T-cell (primary cell): ENCODE measurements at regions of chr17 and their contacts with region 1.

Region 1: DNA sequence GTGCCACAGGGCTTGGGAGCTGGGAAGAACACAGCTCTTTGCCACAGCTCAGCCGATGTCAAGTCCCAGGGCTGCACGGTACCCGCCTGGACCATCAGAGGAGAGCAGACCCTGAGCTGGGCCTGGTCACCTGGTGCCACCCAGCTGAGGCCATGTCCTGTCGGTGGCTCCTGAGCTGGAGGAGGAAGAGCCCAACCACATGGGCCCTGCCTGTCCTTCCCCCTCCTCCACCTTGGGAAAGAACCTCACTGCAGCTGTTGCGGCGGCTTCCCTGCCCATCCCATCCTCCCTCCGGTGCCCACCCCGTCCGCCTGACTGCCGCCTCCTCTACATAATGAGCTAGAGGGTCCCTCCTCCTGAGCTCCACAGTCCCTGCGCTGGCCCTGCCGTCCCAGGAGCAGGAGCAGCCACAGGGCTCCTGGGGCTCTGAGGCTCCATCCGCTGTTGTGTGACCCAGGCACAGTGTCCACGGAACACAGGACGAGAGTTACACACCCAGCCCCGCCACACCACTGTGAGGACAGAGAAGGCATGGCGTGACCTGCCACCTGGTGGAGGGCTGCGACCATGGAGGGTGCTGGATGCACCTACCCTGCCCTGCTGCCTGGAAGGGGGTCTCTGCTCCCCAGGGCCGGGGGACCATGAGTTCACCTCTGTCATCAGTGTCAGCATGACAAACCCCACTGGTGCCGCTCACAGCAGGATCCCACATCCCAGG is 21.4 kb upstream of the CHMP6 start:
- DNase-seq: peak in 27 of 35 experiments; percentile 15 to 53 (median 32)
- ATAC-seq: peak; percentile 37 to 72 (median 60)
- H3K4me3 ChIP-seq: no peak overlapping the region
- H3K4me3 Mint-ChIP-seq: peak overlapping the region in 1 of 3 donors; percentile 29
- H3K27ac ChIP-seq: no peak overlapping the region
- H3K27ac Mint-ChIP-seq: no peak overlapping the region
- H3K4me1 ChIP-seq: peaks cover 0 to 27% of the 10 kb centered on the region in 2 experiments
- H3K4me1 Mint-ChIP-seq: peaks cover 5 to 11% (median 6%) of the 10 kb centered on the region in 3 donors
- H3K27me3 ChIP-seq: peaks cover 0 to 31% of the 10 kb centered on the region in 2 experiments
- H3K27me3 Mint-ChIP-seq: peaks cover 4 to 5% of the 10 kb centered on the region in 2 donors

Region 2: DNA sequence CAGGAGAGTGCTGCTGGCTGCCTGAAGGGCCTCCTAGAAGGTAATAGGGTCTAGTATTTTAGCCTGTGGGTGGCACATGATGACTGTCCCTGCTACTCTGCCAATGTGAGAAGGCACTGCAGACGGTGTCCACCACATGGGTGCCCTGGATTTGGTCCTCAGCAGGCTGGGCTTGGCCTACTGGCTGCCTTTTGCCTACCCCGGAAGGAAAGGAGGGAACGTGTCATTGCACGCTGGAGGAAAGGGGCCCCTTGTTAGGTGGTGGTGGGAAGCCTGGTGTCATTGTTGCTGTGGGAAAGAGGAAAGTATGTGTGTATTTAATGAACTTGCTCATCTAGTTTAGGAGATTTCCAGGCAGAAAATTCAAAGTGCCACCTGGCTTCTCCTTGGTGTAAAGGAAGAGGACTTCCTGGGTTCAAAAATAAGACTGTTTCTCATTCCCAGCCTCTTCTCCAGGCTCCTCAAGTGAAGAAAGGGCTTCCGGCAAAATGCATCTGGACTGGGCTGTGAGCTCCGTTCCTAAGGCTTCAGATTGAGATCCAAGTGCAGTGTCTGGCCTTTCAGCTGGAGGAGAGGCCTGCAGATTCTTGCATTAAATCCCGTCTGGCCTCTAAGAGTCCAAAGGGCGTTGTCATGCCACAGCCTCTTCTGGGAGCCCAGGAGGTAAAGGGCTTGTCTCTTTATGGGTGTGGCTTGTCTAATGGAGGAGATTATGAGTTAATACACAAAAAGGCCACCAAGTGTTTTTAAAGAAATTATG is 370.5 kb before region 1 on chr17:
- CTCF ChIA-PET with region 1: no interaction called
- POLR2A ChIA-PET with region 1: no interaction called
- DNase-seq: no peak
- ATAC-seq: no peak
- H3K4me3 ChIP-seq: no peak overlapping the region
- H3K4me3 Mint-ChIP-seq: peak overlapping the region in 1 of 3 donors; percentile 44
- H3K27ac ChIP-seq: no peak overlapping the region
- H3K27ac Mint-ChIP-seq: no peak overlapping the region
- H3K4me1 ChIP-seq: peaks cover 20 to 31% of the 10 kb centered on the region in 2 experiments
- H3K4me1 Mint-ChIP-seq: peaks cover 60 to 78% (median 71%) of the 10 kb centered on the region in 3 donors
- H3K27me3 ChIP-seq: no peaks in the 10 kb centered on the region
- H3K27me3 Mint-ChIP-seq: no peaks in the 10 kb centered on the region

Region 3: GRCh38 chr17:81130385-81131288 is 160.4 kb after region 1 on chr17:
- CTCF ChIA-PET with region 1: no interaction called
- POLR2A ChIA-PET with region 1: interaction called in 1 of 2 experiments, 13 read pairs
- DNase-seq: no peak
- ATAC-seq: no peak
- H3K4me3 ChIP-seq: no peak overlapping the region
- H3K4me3 Mint-ChIP-seq: no peak overlapping the region
- H3K27ac ChIP-seq: no peak overlapping the region
- H3K27ac Mint-ChIP-seq: no peak overlapping the region
- H3K4me1 ChIP-seq: no peaks in the 10 kb centered on the region
- H3K4me1 Mint-ChIP-seq: no peaks in the 10 kb centered on the region
- H3K27me3 ChIP-seq: peaks cover 0 to 8% of the 10 kb centered on the region in 2 experiments
- H3K27me3 Mint-ChIP-seq: no peaks in the 10 kb centered on the region